ENCODE measurements at regions of chr1 and their contacts with region 1.

Region 1: DNA sequence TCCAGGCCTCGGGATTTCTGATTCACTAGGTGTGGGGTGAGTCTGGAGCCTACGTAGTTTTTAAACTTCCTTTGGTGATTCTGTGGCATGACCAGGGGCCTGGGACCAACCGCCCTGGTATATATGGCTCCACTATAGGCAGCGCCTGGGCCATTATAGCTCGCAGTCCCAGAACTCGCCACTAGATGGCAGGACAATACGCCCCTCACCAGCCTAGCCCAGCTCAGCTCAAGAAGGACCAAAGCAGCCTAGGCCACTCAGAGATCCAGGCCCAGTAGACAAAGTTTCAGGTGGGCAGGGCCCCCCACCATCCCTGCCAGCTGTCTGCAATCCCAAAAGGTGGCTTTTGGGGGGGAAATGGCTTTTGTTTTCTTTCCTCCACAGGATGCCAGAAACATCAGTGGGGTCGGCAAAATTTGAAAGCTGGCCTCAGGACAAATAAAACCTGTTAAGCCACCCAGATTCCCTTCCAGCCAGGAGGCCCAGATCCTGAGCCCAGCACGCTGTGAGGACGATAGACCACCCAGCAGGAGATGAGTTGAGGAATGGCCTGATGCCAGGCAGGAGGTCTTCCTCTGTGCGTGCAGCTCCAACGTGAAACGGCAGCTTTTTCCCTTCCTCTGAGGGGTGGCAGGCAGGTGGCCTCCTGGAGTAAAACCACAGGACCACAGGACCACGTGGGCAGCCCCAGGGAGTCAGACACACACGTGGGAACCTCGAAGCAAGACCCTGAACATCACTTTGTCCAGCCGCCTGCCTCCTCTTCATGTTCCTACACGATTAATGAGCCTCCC is 24.8 kb upstream of the TMEM51 start:
- DNase-seq: peak; percentile 69
- H3K4me3 ChIP-seq: no peak overlapping the region
- H3K27ac ChIP-seq: no peak overlapping the region
- H3K4me1 ChIP-seq: no peaks in the 10 kb centered on the region
- H3K27me3 ChIP-seq: peaks cover 6% of the 10 kb centered on the region

Region 2: GRCh38 chr1:14755518-14756252 is 373.0 kb before region 1 on chr1:
- in situ Hi-C with region 1: no loop called
- DNase-seq: no peak
- H3K4me3 ChIP-seq: no peak overlapping the region
- H3K27ac ChIP-seq: no peak overlapping the region
- H3K4me1 ChIP-seq: no peaks in the 10 kb centered on the region
- H3K27me3 ChIP-seq: peaks cover 29% of the 10 kb centered on the region

Region 3: DNA sequence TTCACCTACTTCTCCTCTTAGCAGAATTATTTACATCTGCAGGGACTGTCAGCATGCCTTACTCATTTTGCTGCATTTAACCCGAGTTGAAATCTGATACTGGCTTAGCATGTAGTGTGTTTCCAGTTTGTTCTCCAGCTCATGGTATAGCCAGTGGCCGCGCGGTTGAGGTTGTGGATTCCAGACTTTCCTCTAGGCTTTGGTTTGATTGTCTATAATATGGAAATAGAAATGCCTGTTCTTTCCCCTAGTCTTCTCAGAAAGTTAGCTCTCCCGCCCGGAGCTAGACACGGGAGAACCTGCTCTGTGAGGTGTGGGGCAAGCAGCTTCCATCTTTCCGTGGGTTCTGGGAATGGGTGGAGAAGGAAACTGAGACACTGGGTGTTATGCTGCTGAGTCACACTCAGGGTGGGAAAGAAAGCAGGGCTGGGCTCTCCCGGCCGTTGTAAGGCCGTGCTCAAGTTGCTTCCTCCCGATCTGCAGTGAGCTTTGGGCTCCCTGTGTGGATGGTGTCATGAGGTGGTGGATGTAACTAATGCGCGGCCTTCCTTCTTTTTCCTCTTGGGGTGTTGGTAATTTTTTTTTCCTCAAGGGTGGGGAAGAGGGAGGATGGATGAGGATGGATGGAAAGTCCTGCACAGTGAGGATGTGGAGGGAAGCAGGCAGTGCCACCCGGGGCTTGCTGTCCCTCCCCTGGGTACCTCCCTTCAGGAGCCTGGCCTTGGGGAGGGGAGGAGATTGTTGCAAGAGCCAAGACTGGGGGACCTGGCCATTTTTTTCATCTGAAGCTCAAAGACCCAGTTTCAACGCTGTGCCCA is 181.8 kb before region 1 on chr1:
- in situ Hi-C with region 1: no loop called
- DNase-seq: peak; percentile 84
- H3K4me3 ChIP-seq: peak overlapping the region; percentile 65
- H3K27ac ChIP-seq: peak overlapping the region; percentile 95
- H3K4me1 ChIP-seq: peaks cover 56% of the 10 kb centered on the region
- H3K27me3 ChIP-seq: no peaks in the 10 kb centered on the region

Region 4: GRCh38 chr1:15272009-15272788 is 143.5 kb after region 1 on chr1:
- in situ Hi-C with region 1: loop called (anchors 10 kb)
- DNase-seq: peak; percentile 90
- H3K4me3 ChIP-seq: no peak overlapping the region
- H3K27ac ChIP-seq: no peak overlapping the region
- H3K4me1 ChIP-seq: no peaks in the 10 kb centered on the region
- H3K27me3 ChIP-seq: peaks cover 11% of the 10 kb centered on the region

Region 5: DNA sequence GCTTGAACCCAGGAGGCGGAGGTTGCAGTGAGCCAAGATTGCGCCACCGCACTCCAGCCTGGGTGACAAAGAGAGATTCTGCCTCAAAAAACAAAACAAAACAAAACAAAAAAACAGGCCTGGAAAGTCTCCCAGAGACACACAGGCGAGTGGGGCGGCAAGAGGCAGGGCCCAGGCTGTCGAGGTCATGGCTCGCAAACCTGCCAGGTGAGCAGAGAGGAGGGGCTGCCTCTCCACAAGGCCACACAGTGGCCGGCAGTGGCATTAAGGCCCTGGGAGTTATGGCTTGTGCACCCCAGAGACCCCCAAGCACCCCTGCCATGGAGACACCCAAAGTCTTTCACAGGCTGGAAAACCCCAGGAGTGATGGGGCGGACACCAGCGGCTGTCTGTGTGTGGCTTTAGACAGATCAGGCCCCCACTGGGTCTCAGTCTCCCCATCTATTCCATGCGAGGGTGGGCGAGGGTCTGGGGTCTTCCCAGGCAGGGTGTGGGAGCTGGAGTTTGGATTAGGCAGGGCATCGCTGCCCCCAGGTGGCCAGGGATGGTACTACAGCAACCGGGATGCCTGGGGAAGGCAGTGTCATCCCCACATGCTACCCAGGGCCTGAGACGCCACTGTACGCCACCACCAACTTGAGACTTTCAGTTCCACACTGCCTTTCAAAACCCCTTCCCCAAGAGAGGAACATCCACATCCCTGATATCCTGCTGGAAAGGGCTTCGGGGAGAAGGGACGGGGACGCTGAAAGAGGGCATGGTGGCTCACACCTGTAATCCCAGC is 302.3 kb after region 1 on chr1:
- in situ Hi-C with region 1: loop called (anchors 25 kb)
- DNase-seq: peak; percentile 46
- H3K4me3 ChIP-seq: no peak overlapping the region
- H3K27ac ChIP-seq: no peak overlapping the region
- H3K4me1 ChIP-seq: peaks cover 10% of the 10 kb centered on the region
- H3K27me3 ChIP-seq: no peaks in the 10 kb centered on the region